Activated naive CD4-positive, alpha-beta T cell treated with anti-CD3 and anti-CD28 coated beads for 36 hours (primary cell): ENCODE measurements at regions of chr21 and their contacts with region 1.

Region 1: GRCh38 chr21:17925000-17925610 is 105.9 kb upstream of the C21orf91 start:
- DNase-seq: peak; percentile 68
- H3K4me3 Mint-ChIP-seq: no peak overlapping the region
- H3K27ac Mint-ChIP-seq: no peak overlapping the region
- H3K4me1 Mint-ChIP-seq: no peaks in the 10 kb centered on the region
- H3K27me3 Mint-ChIP-seq: peaks cover 5% of the 10 kb centered on the region

Region 2: GRCh38 chr21:17387030-17387617 is 538.0 kb before region 1 on chr21:
- CTCF ChIA-PET with region 1: interaction called, 3 read pairs
- intact Hi-C with region 1: loop called (anchors 1 kb)
- DNase-seq: peak; percentile 61
- H3K4me3 Mint-ChIP-seq: no peak overlapping the region
- H3K27ac Mint-ChIP-seq: no peak overlapping the region
- H3K4me1 Mint-ChIP-seq: no peaks in the 10 kb centered on the region
- H3K27me3 Mint-ChIP-seq: peaks cover 10% of the 10 kb centered on the region

Region 3: DNA sequence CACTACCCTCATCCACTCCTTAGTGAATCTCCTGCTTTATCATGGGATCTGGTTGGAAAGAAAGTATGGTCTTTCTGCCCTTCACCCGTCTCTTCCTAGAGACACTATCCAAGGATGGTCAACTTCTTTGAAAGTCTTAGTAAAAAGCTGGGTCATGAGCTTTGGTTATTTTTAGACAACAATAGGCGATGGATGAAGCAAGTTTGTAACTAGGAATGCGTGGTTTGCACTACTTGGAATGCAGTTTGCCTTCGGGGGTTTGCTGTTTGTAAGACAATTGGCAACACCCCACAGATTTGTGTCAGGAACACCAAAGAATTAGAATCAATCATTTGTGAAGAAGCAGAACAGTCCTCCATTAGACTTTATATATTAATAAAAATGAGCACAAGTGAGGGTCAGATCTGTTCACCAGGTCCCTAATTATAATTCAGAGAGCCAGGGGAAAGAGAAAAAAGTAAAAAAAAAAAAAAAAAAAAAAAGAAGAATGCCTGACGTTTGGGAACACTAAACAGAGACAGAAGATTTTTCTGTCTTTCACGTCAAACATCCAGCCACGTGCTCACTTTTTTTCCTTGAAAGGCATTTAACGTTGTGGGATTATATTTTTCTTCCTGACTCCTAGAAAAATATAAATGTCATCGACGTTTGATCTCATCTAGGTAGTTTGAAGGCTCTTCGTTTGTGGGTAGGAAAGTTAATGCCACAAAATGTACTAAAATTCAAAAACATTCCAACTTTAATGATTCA is 251.7 kb before region 1 on chr21:
- CTCF ChIA-PET with region 1: interaction called, 31 read pairs
- intact Hi-C with region 1: no loop called
- DNase-seq: no peak
- H3K4me3 Mint-ChIP-seq: no peak overlapping the region
- H3K27ac Mint-ChIP-seq: no peak overlapping the region
- H3K4me1 Mint-ChIP-seq: no peaks in the 10 kb centered on the region
- H3K27me3 Mint-ChIP-seq: no peaks in the 10 kb centered on the region

Region 4: GRCh38 chr21:17688912-17689874 is 235.9 kb before region 1 on chr21:
- CTCF ChIA-PET with region 1: interaction called, 28 read pairs
- intact Hi-C with region 1: no loop called
- DNase-seq: peak; percentile 74
- H3K4me3 Mint-ChIP-seq: no peak overlapping the region
- H3K27ac Mint-ChIP-seq: no peak overlapping the region
- H3K4me1 Mint-ChIP-seq: peaks cover 32% of the 10 kb centered on the region
- H3K27me3 Mint-ChIP-seq: peaks cover 2% of the 10 kb centered on the region

Region 5: GRCh38 chr21:17911628-17912027 is 13.5 kb before region 1 on chr21:
- CTCF ChIA-PET with region 1: interaction called, 14 read pairs
- intact Hi-C with region 1: no loop called
- DNase-seq: no peak
- H3K4me3 Mint-ChIP-seq: no peak overlapping the region
- H3K27ac Mint-ChIP-seq: no peak overlapping the region
- H3K4me1 Mint-ChIP-seq: no peaks in the 10 kb centered on the region
- H3K27me3 Mint-ChIP-seq: peaks cover 2% of the 10 kb centered on the region

Region 6: DNA sequence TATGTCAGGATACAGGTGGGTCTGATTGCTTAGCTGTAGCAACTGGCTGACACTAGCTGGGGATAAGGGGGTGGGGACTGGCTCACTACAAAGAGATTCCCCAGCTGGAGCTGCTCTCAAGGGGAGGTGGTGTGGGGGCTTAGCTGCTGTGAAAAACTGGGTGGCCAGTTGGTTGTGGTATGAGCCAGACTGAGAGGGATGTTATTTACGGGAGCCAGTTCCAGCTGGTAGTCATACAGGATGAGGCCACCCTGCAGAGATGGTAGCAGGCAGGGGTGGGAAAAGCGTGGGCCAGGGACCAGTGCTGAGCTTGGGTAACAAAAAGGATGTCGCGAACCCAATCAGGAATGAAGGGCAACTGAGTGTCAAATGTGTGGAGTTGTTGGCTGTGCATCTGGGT is 98.1 kb after region 1 on chr21:
- CTCF ChIA-PET with region 1: no interaction called
- intact Hi-C with region 1: no loop called
- DNase-seq: no peak
- H3K4me3 Mint-ChIP-seq: no peak overlapping the region
- H3K27ac Mint-ChIP-seq: no peak overlapping the region
- H3K4me1 Mint-ChIP-seq: no peaks in the 10 kb centered on the region
- H3K27me3 Mint-ChIP-seq: no peaks in the 10 kb centered on the region